Activated naive CD4-positive, alpha-beta T cell treated with anti-CD3 and anti-CD28 coated beads for 36 hours (primary cell): ENCODE measurements at regions of chr21 and their contacts with region 1.

Region 1: GRCh38 chr21:34091607-34092006 is 18.2 kb downstream of the MRPS6 start:
- DNase-seq: no peak
- H3K4me3 Mint-ChIP-seq: no peak overlapping the region
- H3K27ac Mint-ChIP-seq: no peak overlapping the region
- H3K4me1 Mint-ChIP-seq: peaks cover 44% of the 10 kb centered on the region
- H3K27me3 Mint-ChIP-seq: no peaks in the 10 kb centered on the region

Region 2: DNA sequence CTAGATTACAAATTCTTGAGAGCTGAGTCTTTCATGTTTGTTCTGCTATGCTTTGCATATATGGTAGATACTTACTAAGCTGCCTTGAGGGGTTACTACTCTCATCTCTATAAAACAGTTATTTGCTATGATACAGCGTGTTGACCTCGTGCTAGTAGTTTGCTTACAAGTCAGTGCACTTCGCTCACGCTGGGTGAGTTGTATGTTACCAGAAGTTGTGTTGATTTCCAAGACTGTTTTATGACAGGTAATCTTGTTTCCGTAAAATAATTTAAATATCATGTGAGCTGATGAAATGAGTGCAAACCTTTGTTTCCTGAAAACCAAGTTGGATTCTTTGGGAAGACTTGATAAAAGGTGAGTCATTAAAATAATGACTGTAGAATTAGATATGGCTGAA is 10.9 kb before region 1 on chr21:
- CTCF ChIA-PET with region 1: interaction called, 6 read pairs
- intact Hi-C with region 1: loop called (anchors 1 kb)
- DNase-seq: no peak
- H3K4me3 Mint-ChIP-seq: no peak overlapping the region
- H3K27ac Mint-ChIP-seq: no peak overlapping the region
- H3K4me1 Mint-ChIP-seq: peaks cover 82% of the 10 kb centered on the region
- H3K27me3 Mint-ChIP-seq: no peaks in the 10 kb centered on the region

Region 3: DNA sequence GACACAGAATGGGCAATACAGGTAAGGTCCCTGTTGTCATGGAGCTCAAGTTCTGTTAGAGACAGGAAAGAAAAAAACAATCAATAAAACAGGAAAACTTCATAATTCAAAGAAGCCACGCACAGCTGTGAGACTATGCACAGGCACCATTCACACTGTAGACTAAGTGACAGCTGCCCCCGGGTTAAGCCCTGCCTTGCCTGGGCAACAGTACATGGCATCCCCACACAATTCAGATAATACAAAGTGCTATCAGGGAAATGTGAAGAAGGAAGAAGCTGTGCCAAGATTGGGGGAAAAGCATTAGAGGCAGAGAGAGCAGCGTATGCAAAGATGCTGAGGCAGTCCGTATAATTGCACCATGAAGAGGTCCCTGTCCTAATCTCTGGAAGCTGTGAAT is 263.2 kb after region 1 on chr21:
- CTCF ChIA-PET with region 1: no interaction called
- intact Hi-C with region 1: no loop called
- DNase-seq: no peak
- H3K4me3 Mint-ChIP-seq: no peak overlapping the region
- H3K27ac Mint-ChIP-seq: no peak overlapping the region
- H3K4me1 Mint-ChIP-seq: peaks cover 3% of the 10 kb centered on the region
- H3K27me3 Mint-ChIP-seq: peaks cover 3% of the 10 kb centered on the region